Right ventricle myocardium superior (tissue), 1 donor: ENCODE measurements at regions of chr13 and their contacts with region 1.

Region 1: GRCh38 chr13:101144808-101145419 is 271.4 kb downstream of the NALCN start:
- DNase-seq: no peak
- ATAC-seq: peak; percentile 59

Region 2: DNA sequence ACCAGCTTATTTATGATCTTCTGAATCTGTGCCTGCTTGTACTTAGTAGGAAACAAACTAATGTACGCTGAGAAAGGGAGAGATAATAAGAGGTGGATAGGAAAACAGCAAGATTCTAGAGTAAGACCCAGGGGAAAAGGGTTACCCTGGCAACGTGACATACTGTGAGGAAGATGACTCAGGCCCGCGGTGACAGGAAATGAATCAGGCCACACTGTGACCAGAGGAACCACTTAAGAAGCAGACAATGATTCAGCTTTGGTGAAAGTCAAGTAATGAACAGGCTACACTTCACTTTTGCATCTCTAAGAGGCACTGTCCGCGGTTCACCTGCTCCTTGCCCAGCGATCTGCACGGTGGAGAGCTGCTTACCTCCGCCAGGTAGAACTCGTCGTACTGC is 113.2 kb after region 1 on chr13:
- intact Hi-C with region 1: no loop called
- DNase-seq: no peak
- ATAC-seq: no peak

Region 3: GRCh38 chr13:101763191-101763590 is 618.3 kb after region 1 on chr13:
- intact Hi-C with region 1: loop called (anchors 10 kb)
- DNase-seq: no peak
- ATAC-seq: no peak